ENCODE measurements at regions of chr20 and their contacts with region 1.

Region 1: DNA sequence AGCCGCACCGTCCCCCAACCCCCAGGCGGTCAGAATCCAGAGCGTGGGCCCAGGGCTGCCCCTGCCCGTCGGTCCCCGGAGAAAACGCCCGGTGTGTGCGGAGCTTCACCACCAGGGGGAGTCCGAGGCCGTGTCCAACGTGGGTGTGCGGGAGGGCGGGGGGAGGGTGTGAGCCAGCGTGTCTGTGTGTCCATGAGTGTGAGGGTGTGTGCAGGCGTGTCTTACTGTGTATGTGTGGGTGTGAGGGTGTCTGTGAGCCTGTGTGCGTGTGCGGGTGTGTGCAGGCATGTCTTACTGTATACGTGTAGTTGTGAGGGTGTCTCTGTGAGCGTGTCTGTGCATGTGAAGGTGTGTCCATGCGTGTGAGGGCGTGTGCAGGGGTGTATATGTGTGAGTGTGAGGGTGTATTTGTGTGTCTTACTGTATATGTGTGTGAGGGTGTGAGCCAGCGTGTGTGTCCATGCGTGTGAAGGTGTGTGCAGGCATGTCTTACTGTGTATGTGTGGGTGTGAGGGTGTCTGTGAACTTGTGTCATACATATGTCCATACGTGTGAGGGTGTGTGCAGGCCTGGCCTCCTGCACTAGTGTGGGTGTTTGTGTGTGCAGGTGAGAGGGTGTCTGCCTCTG is 24.6 kb upstream of the GATA5 start:
- DNase-seq: peak; percentile 94
- H3K4me3 Mint-ChIP-seq: peak overlapping the region; percentile 9
- H3K27ac Mint-ChIP-seq: peak overlapping the region; percentile 98
- H3K4me1 Mint-ChIP-seq: peaks cover 32% of the 10 kb centered on the region
- H3K27me3 Mint-ChIP-seq: no peaks in the 10 kb centered on the region

Region 2: DNA sequence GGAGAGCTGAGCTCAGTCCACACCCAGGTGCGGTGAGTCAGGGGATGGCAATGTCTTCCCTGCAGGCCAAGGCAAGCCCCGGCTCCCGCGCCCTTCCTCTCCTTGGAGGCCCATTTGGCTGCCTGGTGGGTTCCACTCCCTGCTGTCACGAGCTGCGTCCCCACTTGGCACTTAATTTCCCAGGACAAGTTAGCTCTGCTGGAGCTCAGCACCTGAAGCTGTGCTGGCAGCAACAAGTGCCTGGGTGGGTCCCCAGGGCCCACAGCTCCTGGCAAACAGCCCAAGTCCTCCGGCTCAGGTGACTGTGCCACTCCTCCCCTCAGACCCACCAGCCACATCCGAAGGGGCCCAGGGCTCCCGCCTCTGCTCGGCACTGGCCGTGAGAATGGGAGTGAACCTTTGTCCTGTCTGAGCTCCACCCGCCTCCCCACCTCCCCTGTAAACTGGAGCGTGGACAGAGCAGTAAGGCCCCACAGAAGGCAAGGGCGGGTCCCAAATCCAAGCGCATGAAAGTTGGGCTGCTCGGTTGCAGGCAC is 150.2 kb before region 1 on chr20:
- intact Hi-C with region 1: no loop called
- DNase-seq: no peak
- H3K4me3 Mint-ChIP-seq: no peak overlapping the region
- H3K27ac Mint-ChIP-seq: no peak overlapping the region
- H3K4me1 Mint-ChIP-seq: peaks cover 2% of the 10 kb centered on the region
- H3K27me3 Mint-ChIP-seq: no peaks in the 10 kb centered on the region

Region 3: DNA sequence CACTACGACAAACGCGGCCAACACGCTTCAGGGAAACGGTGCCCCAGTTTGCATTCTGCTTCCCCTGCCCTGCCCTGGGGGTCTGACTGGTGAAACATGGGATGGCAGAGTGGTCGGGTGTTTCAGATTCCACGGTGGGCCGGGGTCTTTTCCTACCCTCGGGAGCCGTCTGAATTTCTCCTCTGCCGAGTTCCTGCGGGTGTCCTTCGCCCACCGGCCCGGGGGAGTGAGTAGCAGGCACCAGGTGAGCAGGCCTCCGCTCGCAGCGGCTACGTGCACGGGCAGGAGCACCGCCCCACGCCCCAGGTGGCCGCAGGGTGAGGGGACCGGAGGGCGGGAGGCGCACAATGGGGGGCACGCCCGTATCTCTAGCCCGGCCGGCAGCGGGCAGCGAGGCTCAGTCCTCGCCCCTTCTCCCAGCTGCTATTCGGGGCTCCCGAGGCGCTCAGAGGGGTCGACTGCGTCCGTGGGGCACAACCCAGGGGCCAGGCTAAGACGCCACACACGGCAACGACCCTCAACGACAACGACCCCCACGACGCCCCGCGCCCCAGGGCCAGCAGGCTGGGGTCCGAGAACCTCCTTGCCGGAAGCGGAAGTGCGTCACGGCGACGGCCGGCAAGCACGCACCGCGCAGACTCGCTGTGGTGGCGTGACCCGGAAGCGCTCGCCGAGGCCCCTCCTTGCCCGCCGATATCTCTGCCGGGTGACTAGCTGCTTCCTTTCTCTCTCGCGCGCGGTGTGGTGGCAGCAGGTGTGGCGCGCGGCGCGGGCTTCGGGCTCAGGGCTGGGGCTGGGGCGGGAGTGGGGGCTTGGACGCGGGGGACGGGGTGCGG is 113.8 kb before region 1 on chr20 and contains the start of gene RPS21:
- intact Hi-C with region 1: loop called (anchors 5 kb)
- DNase-seq: peak; percentile 98
- H3K4me3 Mint-ChIP-seq: peak within 1 kb of the TSS; percentile 98
- H3K27ac Mint-ChIP-seq: peak within 1 kb of the TSS; percentile 94
- H3K4me1 Mint-ChIP-seq: peaks cover 37% of the 10 kb centered on the region
- H3K27me3 Mint-ChIP-seq: no peaks in the 10 kb centered on the region
- total RNA-seq, gene RPS21: 2,091 and 2,109 TPM in 2 replicates

Region 4: DNA sequence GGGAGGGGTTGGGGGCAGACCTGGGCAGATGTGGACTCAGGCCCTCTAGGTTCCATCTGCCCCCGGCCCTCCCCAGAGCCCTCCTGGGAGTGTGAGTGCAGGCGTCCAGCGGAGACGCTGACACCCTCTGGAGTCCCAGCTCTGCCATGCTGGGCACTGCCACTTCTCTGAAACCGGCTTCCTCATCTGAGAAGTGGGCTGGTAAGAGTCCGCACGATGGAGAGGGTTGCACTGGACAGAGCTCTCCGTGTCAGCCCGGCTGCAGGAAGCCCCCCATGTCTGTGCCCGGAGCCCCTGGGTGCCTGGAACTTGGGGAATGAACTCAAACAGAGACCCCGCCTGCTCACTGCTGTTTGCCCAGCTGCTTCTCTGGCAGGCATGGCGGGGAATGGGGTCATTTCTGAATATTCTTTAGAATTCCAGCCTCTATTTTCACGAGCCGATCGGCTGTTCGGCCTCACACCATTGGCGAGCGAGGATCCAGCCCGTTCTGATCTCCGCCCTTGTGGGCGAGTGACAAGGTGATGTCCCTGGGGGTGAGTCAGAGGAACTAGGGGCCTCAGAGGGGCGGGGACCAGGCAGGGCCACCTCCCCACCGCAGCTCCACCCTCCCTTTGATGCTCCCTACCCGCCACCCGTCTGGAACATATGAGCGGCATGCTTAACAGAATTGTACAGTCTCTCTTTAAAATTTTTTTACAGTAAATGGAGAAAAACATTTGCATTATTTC is 23.3 kb after region 1 on chr20:
- intact Hi-C with region 1: loop called (anchors 2 kb)
- DNase-seq: peak; percentile 87
- H3K4me3 Mint-ChIP-seq: peak overlapping the region; percentile 56
- H3K27ac Mint-ChIP-seq: peak overlapping the region; percentile 68
- H3K4me1 Mint-ChIP-seq: peaks cover 16% of the 10 kb centered on the region
- H3K27me3 Mint-ChIP-seq: peaks cover 8% of the 10 kb centered on the region

Region 5: DNA sequence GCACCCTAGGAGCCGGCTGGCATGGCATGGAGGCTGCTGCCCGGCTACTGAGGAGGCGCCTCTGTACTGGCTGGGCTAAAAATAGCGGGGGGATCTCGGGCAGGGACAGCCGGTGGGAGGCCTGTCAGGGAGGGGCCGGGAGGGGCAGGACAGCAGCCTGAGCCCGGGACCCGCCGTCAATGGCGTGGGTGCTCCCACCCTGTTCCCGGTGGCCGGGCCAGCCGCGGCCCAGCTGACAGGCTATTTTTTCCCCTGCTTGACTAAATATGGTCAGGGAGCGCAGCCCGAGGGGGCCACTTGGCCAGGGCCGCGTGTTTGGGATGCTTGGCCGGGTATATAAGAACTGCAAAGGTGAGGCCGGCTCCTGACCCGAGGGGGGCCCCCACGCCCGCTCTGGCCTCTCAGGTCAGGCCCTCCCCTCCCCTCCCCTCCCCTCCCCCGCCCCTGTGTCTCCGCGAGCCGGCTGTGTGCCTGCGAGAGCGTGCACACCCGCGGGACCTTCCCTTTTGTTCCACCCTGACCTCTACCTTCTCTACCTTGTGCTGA is 49.8 kb after region 1 on chr20:
- intact Hi-C with region 1: no loop called
- DNase-seq: no peak
- H3K4me3 Mint-ChIP-seq: no peak overlapping the region
- H3K27ac Mint-ChIP-seq: no peak overlapping the region
- H3K4me1 Mint-ChIP-seq: peaks cover 3% of the 10 kb centered on the region
- H3K27me3 Mint-ChIP-seq: peaks cover 32% of the 10 kb centered on the region

Region 6: GRCh38 chr20:62603021-62603906 is 102.9 kb after region 1 on chr20:
- intact Hi-C with region 1: loop called (anchors 5 kb)
- DNase-seq: peak; percentile 81
- H3K4me3 Mint-ChIP-seq: peak overlapping the region; percentile 79
- H3K27ac Mint-ChIP-seq: peak overlapping the region; percentile 64
- H3K4me1 Mint-ChIP-seq: peaks cover 27% of the 10 kb centered on the region
- H3K27me3 Mint-ChIP-seq: peaks cover 33% of the 10 kb centered on the region

Region 7: GRCh38 chr20:62616728-62617621 is 116.6 kb after region 1 on chr20:
- intact Hi-C with region 1: loop called (anchors 1 kb)
- DNase-seq: peak; percentile 92
- H3K4me3 Mint-ChIP-seq: peak overlapping the region; percentile 46
- H3K27ac Mint-ChIP-seq: peak overlapping the region; percentile 94
- H3K4me1 Mint-ChIP-seq: peaks cover 30% of the 10 kb centered on the region
- H3K27me3 Mint-ChIP-seq: peaks cover 8% of the 10 kb centered on the region

Region 8: DNA sequence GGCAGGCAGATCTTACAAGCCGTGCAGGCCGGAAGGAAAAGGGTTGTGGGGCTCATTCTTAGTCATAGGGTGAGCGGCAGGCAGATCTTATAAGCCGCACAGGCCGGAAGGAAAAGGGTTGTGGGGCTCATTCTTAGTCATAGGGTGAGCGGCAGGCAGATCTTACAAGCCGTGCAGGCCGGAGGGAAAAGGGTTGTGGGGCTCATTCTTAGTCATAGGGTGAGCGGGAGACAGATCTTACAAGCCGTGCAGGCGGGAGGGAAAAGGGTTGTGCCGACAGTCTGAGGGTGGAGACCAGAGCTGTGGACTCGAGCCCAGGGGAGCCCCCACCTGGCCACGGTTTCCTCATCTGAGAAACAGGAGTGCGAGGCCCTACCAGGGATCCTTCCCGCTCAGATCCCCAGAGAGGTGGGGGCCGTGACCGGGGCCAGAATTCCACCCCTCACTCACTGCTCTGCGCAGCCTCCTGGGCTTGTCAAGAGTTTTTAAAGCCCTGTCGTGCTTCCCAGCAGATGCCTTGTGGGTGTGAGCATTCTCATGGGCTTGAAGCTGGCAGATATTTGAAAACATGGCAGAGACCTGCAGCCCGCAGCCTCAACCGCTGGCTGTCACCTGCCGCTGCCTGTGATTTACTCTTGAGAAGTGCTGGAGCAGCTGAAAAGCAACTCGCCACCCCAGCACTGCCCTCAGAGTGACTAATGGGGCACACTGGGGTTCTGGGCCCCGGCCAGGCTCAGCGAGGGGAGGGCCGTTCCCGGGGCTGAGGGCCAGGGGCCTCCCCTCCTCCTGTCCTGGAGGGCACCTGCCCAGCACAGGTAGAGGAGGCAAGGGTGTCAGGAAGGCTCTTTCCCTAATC is 240.2 kb after region 1 on chr20:
- intact Hi-C with region 1: loop called (anchors 5 kb)
- DNase-seq: peak; percentile 96
- H3K4me3 Mint-ChIP-seq: peak overlapping the region; percentile 75
- H3K27ac Mint-ChIP-seq: peak overlapping the region; percentile 80
- H3K4me1 Mint-ChIP-seq: peaks cover 32% of the 10 kb centered on the region
- H3K27me3 Mint-ChIP-seq: peaks cover 11% of the 10 kb centered on the region

Region 9: GRCh38 chr20:62808211-62808865 is 308.0 kb after region 1 on chr20:
- intact Hi-C with region 1: loop called (anchors 5 kb)
- DNase-seq: peak; percentile 93
- H3K4me3 Mint-ChIP-seq: peak overlapping the region; percentile 45
- H3K27ac Mint-ChIP-seq: peak overlapping the region; percentile 72
- H3K4me1 Mint-ChIP-seq: peaks cover 20% of the 10 kb centered on the region
- H3K27me3 Mint-ChIP-seq: no peaks in the 10 kb centered on the region

Measured in activated CD4-positive, alpha-beta T cell treated with anti-CD3 and anti-CD28 coated beads, Interleukin-2, amount 10 ng/mL, durations not matched to agents 24 days and 14 days (primary cell).